ENCODE measurements at regions of chr1 and their contacts with region 1.

Region 1: DNA sequence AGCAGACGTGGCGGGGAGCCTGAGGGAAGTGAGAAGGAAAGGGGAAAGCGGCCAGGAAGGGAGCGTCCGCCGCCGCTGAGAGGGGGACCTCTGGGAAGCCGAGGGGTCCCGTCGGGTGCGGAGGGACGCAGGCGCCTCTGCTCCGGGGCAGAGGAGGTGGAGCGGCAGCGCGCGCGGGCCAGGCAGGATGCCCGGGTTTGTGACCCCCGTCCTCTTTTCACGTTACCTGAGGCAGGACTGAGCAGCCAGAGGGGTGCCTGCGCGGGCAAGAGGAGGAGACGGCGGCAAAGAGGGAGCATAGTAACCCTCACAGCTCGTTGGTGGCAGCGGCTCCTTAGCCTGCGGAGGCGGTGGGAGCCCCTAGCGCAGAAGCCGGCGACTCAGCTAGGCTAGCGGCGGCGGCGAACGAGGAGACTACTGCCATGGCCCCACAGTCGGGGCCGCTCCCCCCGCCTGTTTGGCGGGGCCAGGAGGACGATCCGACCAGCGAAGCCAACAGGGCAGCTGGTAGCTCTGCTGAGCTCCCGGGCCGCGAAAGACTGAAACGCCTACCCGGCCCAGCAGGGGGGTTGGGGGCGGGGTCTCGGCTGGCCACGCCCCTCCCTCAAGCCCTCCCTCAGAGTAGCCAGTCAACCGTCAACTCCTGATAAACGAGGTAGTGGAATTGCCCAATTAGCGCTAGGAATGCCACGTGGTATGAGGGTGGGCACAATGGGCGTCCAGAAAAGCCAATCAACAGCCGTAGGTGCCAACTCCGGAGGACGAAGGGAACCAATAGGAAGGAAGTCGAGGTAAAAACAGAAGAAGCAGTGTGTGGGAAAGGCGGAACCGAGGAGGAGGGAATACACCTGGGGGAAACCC is at the start of gene TESK2:
- DNase-seq: peak; percentile 98
- H3K4me3 Mint-ChIP-seq: no peak within 1 kb of the TSS
- H3K27ac Mint-ChIP-seq: no peak within 1 kb of the TSS
- H3K4me1 Mint-ChIP-seq: peaks cover 6% of the 10 kb centered on the region
- H3K27me3 Mint-ChIP-seq: no peaks in the 10 kb centered on the region
- total RNA-seq, gene TESK2: 4.6 to 6.0 TPM

Region 2: DNA sequence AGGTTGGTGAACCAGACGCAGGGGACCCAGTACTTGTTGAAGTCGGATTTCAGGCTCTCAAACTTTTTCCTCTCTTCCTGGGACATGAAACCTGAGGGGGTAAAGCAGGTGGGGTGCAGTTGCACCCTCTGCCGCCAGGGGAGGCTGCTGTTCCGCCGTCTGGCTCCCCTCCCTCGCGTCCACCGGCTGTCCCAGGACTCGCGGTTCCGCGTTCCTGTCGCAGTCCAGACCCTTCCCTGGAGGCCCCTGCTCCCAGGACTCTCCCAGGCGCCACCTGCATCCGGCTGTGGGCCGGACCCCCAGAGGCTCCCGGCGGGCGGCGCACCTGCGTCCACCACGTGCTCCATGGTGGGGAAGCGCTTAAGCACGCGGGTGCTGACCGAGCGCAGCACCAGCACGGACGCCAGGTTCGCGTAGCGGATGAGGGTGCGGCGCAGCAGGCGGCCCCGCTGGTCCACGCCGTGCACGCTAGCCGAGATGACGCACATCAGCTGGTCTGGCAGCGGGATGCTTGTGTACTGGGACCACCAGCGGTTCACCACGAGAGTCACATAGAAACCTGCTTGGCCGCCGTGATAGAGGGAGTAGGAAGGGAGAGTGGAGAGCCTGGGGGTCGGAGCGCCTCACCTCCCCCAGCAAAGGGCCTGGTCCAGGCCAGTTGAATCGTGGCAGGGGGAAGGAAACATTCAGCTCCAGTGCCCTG is 704.6 kb before region 1 on chr1:
- CTCF ChIA-PET with region 1: interaction called, 5 read pairs
- POLR2A ChIA-PET with region 1: no interaction called
- intact Hi-C with region 1: loop called (anchors 5 kb)
- DNase-seq: peak; percentile 83
- H3K4me3 Mint-ChIP-seq: peak overlapping the region; percentile 73
- H3K27ac Mint-ChIP-seq: peak overlapping the region; percentile 31
- H3K4me1 Mint-ChIP-seq: peaks cover 31% of the 10 kb centered on the region
- H3K27me3 Mint-ChIP-seq: no peaks in the 10 kb centered on the region

Region 3: DNA sequence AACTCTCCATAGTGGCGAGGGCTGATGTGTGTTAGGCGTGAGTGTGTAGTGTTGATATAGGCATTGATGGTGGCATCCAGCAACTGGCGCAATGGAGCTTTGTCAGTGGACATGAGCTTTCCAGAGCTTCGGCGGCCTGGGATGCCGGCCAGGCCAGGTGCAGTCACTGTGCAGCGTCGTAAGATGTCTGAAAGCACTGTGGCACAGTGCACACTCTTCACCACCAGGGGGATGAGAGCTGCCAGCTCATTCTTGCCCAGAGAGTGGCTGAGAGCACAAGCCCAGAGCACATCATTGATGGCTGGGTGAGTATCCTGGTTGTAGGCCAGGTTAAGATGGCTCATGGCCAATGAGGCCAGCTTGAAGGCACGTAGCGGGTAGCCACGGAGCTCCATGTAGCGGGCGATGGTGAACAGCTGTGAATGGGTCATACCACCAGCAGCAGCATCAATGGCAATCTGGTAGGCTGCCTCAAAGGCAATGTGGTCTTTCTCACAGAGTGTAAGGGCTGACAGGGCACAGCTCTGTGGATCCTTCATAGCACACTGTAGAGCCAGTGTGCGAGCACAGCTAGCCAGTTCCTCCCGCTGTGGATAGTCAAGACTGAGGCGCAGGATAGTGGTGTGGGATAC is 472.1 kb before region 1 on chr1:
- CTCF ChIA-PET with region 1: interaction called, 59 read pairs
- POLR2A ChIA-PET with region 1: no interaction called
- intact Hi-C with region 1: loop called (anchors 1 kb)
- DNase-seq: peak; percentile 75
- H3K4me3 Mint-ChIP-seq: no peak overlapping the region
- H3K27ac Mint-ChIP-seq: no peak overlapping the region
- H3K4me1 Mint-ChIP-seq: peaks cover 12% of the 10 kb centered on the region
- H3K27me3 Mint-ChIP-seq: no peaks in the 10 kb centered on the region

Region 4: GRCh38 chr1:45146833-45147232 is 344.0 kb before region 1 on chr1:
- CTCF ChIA-PET with region 1: no interaction called
- POLR2A ChIA-PET with region 1: no interaction called
- intact Hi-C with region 1: no loop called
- DNase-seq: no peak
- H3K4me3 Mint-ChIP-seq: no peak overlapping the region
- H3K27ac Mint-ChIP-seq: no peak overlapping the region
- H3K4me1 Mint-ChIP-seq: peaks cover 5% of the 10 kb centered on the region
- H3K27me3 Mint-ChIP-seq: no peaks in the 10 kb centered on the region

Region 5: GRCh38 chr1:45339789-45340570 is 150.9 kb before region 1 on chr1 and contains the starts of genes MUTYH and TOE1:
- CTCF ChIA-PET with region 1: interaction called, 48 read pairs
- POLR2A ChIA-PET with region 1: interaction called, 15 read pairs
- intact Hi-C with region 1: loop called (anchors 1 kb)
- DNase-seq: peak; percentile 97
- H3K4me3 Mint-ChIP-seq: peak within 1 kb of the TSS; percentile 93
- H3K27ac Mint-ChIP-seq: peak within 1 kb of the TSS; percentile 98
- H3K4me1 Mint-ChIP-seq: peaks cover 34% of the 10 kb centered on the region
- H3K27me3 Mint-ChIP-seq: no peaks in the 10 kb centered on the region
- total RNA-seq, gene MUTYH: 49.2 to 51.8 TPM
- total RNA-seq, gene TOE1: 22.8 to 23.1 TPM

Region 6: GRCh38 chr1:45359882-45360513 is 130.9 kb before region 1 on chr1:
- CTCF ChIA-PET with region 1: interaction called, 237 read pairs
- POLR2A ChIA-PET with region 1: interaction called, 3 read pairs
- intact Hi-C with region 1: loop called (anchors 1 kb)
- DNase-seq: peak; percentile 68
- H3K4me3 Mint-ChIP-seq: no peak overlapping the region
- H3K27ac Mint-ChIP-seq: no peak overlapping the region
- H3K4me1 Mint-ChIP-seq: peaks cover 9% of the 10 kb centered on the region
- H3K27me3 Mint-ChIP-seq: no peaks in the 10 kb centered on the region

Region 7: DNA sequence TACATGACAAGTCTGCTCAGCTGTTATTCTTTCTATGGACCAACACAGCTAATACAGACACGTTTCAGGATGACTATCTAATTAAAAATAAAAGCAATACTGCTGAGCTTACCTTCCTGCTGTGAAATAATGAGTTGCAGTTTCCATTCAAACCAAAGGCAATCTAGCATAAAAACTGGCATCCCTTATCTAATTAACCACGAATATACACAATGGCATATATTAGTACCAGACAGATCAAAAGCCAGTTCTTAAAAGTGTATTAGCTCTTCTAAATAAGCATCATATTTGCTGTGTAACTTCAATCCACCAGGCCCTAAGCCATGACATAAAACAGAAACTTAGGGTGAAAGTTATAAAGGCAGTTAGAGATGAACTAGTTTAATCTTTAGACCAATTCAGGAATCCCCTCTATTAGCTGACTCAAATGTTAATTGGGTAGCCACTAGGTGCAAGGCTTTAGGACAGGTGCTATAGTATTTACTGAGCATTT is 20.5 kb before region 1 on chr1:
- CTCF ChIA-PET with region 1: interaction called, 11 read pairs
- POLR2A ChIA-PET with region 1: no interaction called
- intact Hi-C with region 1: no loop called
- DNase-seq: no peak
- H3K4me3 Mint-ChIP-seq: no peak overlapping the region
- H3K27ac Mint-ChIP-seq: no peak overlapping the region
- H3K4me1 Mint-ChIP-seq: no peaks in the 10 kb centered on the region
- H3K27me3 Mint-ChIP-seq: no peaks in the 10 kb centered on the region

Region 8: GRCh38 chr1:45569962-45570581 is 79.2 kb after region 1 on chr1:
- CTCF ChIA-PET with region 1: interaction called, 51 read pairs
- POLR2A ChIA-PET with region 1: no interaction called
- intact Hi-C with region 1: no loop called
- DNase-seq: peak; percentile 81
- H3K4me3 Mint-ChIP-seq: no peak overlapping the region
- H3K27ac Mint-ChIP-seq: peak overlapping the region; percentile 16
- H3K4me1 Mint-ChIP-seq: no peaks in the 10 kb centered on the region
- H3K27me3 Mint-ChIP-seq: no peaks in the 10 kb centered on the region

Measured in activated CD4-positive, alpha-beta memory T cell treated with anti-CD3 and anti-CD28 coated beads for 36 hours (primary cell).